Naive thymus-derived CD8-positive, alpha-beta T cell (primary cell): ENCODE measurements at regions of chr11 and their contacts with region 1.

Region 1: DNA sequence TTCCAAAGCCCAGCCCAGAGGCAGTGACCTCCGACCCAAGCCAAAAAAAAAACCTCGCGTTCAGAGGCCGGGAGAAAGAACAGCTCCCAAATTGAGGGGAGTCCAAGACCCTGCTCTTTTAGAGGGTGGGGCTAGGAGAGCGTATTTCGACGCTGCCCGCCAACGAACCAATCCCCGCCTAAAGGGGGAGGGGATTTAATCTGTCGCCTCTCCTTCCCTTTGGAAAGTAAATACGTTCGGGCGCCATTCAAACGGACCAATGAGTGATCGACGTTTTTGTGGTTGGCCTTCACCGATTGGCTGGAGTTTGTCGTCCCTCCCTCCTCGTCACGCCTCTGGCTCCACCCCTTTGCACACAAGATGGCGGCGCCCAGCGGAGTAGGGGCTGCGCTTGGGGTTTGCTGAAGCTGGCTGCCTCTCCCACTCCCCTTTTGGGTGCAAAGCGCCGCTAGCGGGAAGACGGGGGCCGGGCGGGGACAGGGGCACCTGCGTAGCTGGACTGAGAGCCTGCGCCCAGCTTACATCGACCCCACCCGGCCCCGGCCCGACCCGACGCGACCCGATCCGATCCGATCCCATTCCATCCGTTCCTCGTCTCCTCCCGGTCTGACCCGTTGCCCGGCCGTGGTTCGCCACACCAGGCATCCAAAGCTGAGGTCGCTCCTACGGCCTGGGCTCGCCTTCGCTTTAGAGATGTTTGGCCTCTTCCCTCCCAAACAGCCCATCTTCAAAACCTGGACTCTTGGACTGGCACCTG is at the start of gene RNF26:
- DNase-seq: peak; percentile 81 to 97 (median 94)
- ATAC-seq: peak; percentile 95 to 96
- H3K4me3 Mint-ChIP-seq: peak within 1 kb of the TSS; percentile 88 to 99 (median 98)
- H3K27ac Mint-ChIP-seq: peak within 1 kb of the TSS; percentile 87 to 99 (median 98)
- H3K4me1 Mint-ChIP-seq: peaks cover 14 to 48% (median 42%) of the 10 kb centered on the region in 4 donors
- H3K27me3 Mint-ChIP-seq: peaks cover 4 to 14% (median 11%) of the 10 kb centered on the region in 5 donors
- polyA plus RNA-seq, gene RNF26: 37.0 to 45.9 (median 39.6) TPM

Region 2: DNA sequence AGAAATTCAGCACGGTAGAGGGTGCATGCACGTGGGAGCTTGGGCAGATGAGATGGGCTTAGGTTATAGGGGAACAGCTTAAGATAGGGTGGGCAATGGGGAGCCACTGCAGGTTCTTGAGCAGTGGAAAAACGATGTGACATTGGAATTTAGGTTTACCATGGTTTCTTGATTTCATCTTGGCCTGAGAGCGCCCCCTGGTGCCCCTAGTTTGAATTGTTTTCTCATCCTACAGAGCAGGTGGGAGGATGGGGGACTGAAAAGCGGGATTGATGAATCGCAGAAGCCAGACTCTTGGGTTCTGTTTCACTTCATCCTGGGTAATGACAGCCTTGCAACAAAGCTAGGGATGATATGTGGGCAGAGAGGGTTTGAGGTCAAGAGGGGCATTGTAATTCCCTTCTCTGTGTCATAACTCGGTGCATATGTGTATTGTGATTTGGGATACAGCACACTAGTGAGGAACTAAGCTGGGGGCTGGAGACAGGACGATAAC is 10.8 kb before region 1 on chr11:
- POLR2A ChIA-PET with region 1: interaction called, 10 read pairs
- DNase-seq: peak; percentile 62 to 89 (median 78)
- ATAC-seq: peak; percentile 12 to 21
- H3K4me3 Mint-ChIP-seq: peak overlapping the region in 6 of 10 donors; percentile 2 to 71 (median 38)
- H3K27ac Mint-ChIP-seq: peak overlapping the region in 2 of 10 donors; percentile 0 to 43
- H3K4me1 Mint-ChIP-seq: peaks cover 17 to 33% (median 24%) of the 10 kb centered on the region in 4 donors
- H3K27me3 Mint-ChIP-seq: peaks cover 1 to 8% (median 8%) of the 10 kb centered on the region in 5 donors

Region 3: DNA sequence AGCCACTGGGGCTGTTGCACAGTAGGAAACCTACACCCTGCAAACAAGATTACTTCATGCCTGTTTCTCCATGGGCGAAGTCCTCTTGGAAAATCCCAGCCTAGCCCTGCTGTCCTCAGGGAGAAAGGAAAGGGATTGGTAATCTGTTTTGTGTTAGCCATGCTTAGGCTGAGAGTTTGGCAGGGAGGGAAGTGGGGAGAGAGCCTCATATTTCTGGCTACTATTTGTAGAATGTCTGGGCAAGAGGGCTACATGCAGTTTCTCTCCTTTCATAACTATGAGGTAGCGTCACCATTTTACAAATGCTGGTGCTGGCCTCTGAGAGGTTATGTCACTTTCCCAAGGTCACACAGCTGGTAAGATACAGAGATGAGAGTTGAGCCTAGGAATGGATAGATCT is 12.9 kb after region 1 on chr11:
- POLR2A ChIA-PET with region 1: no interaction called
- DNase-seq: no peak
- ATAC-seq: no peak
- H3K4me3 Mint-ChIP-seq: no peak overlapping the region
- H3K27ac Mint-ChIP-seq: no peak overlapping the region
- H3K4me1 Mint-ChIP-seq: peaks cover 0 to 5% (median 2%) of the 10 kb centered on the region in 4 donors
- H3K27me3 Mint-ChIP-seq: peaks cover 0 to 44% (median 30%) of the 10 kb centered on the region in 5 donors